Activated CD8-positive, alpha-beta T cell treated with anti-CD3 and anti-CD28 coated beads, Interleukin-2, amount 10 ng/mL, durations not matched to agents 7 days and 5 days (primary cell): ENCODE measurements at regions of chr20 and their contacts with region 1.

Region 1: GRCh38 chr20:46022411-46023147 is 6.4 kb upstream of the SLC12A5 start:
- DNase-seq: peak; percentile 82
- ATAC-seq: peak; percentile 74
- H3K4me3 Mint-ChIP-seq: peak overlapping the region; percentile 57
- H3K27ac Mint-ChIP-seq: no peak overlapping the region
- H3K4me1 Mint-ChIP-seq: peaks cover 24% of the 10 kb centered on the region
- H3K27me3 Mint-ChIP-seq: peaks cover 33% of the 10 kb centered on the region

Region 2: GRCh38 chr20:46057856-46058598 is 35.4 kb after region 1 on chr20:
- CTCF ChIA-PET with region 1: interaction called, 13 read pairs
- POLR2A ChIA-PET with region 1: no interaction called
- DNase-seq: no peak
- ATAC-seq: no peak
- H3K4me3 Mint-ChIP-seq: no peak overlapping the region
- H3K27ac Mint-ChIP-seq: no peak overlapping the region
- H3K4me1 Mint-ChIP-seq: peaks cover 36% of the 10 kb centered on the region
- H3K27me3 Mint-ChIP-seq: peaks cover 28% of the 10 kb centered on the region

Region 3: GRCh38 chr20:46089417-46090388 is 67.1 kb after region 1 on chr20 and contains the start of gene NCOA5:
- CTCF ChIA-PET with region 1: interaction called, 24 read pairs
- POLR2A ChIA-PET with region 1: no interaction called
- DNase-seq: peak; percentile 96
- ATAC-seq: peak; percentile 91
- H3K4me3 Mint-ChIP-seq: peak within 1 kb of the TSS; percentile 78
- H3K27ac Mint-ChIP-seq: peak within 1 kb of the TSS; percentile 86
- H3K4me1 Mint-ChIP-seq: peaks cover 40% of the 10 kb centered on the region
- H3K27me3 Mint-ChIP-seq: no peaks in the 10 kb centered on the region
- total RNA-seq, gene NCOA5: 30.3 to 30.9 TPM

Region 4: DNA sequence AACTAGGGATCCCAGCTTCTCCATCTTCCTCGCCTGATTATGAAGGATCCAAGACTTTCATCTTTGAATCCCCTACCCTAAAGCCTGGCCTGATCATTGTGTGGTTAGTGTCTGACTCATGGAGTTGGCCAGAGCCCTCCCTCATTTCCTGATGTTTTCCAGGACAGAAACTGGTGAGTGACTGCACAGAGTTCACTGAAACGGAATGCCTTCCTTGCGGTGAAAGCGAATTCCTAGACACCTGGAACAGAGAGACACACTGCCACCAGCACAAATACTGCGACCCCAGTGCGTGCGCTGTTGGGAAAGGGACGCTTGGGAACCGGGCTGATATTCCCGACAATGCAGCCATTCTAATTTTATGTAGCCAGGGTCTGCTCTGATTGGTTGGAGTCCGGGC is 99.5 kb after region 1 on chr20:
- CTCF ChIA-PET with region 1: no interaction called
- POLR2A ChIA-PET with region 1: no interaction called
- DNase-seq: no peak
- ATAC-seq: no peak
- H3K4me3 Mint-ChIP-seq: no peak overlapping the region
- H3K27ac Mint-ChIP-seq: no peak overlapping the region
- H3K4me1 Mint-ChIP-seq: peaks cover 17% of the 10 kb centered on the region
- H3K27me3 Mint-ChIP-seq: peaks cover 8% of the 10 kb centered on the region